Activated T-helper 2 cell treated with anti-CD3 and anti-CD28 coated beads, Interferon-gamma antibody, Interleukin-2, Interleukin-4, amounts not matched to agents 10 μg/mL and 5 μg/mL and 100 μg/mL, durations not matched to agents 14 hours and 24 hours and 36 hours (primary cell): ENCODE measurements at regions of chr17 and their contacts with region 1.

Region 1: GRCh38 chr17:38667099-38667786 is 7.5 kb downstream of the EPOP start:
- DNase-seq: peak; percentile 53
- H3K4me3 Mint-ChIP-seq: no peak overlapping the region
- H3K27ac Mint-ChIP-seq: no peak overlapping the region
- H3K4me1 Mint-ChIP-seq: peaks cover 13% of the 10 kb centered on the region
- H3K27me3 Mint-ChIP-seq: peaks cover 51% of the 10 kb centered on the region

Region 2: GRCh38 chr17:38428112-38428642 is 239.1 kb before region 1 on chr17 and contains the start of gene ARHGAP23:
- intact Hi-C with region 1: loop called (anchors 10 kb)
- DNase-seq: no peak
- H3K4me3 Mint-ChIP-seq: peak within 1 kb of the TSS; percentile 80
- H3K27ac Mint-ChIP-seq: no peak within 1 kb of the TSS
- H3K4me1 Mint-ChIP-seq: peaks cover 5% of the 10 kb centered on the region
- H3K27me3 Mint-ChIP-seq: peaks cover 33% of the 10 kb centered on the region
- total RNA-seq, gene ARHGAP23: 0.32 and 1.2 TPM in 2 replicates

Region 3: DNA sequence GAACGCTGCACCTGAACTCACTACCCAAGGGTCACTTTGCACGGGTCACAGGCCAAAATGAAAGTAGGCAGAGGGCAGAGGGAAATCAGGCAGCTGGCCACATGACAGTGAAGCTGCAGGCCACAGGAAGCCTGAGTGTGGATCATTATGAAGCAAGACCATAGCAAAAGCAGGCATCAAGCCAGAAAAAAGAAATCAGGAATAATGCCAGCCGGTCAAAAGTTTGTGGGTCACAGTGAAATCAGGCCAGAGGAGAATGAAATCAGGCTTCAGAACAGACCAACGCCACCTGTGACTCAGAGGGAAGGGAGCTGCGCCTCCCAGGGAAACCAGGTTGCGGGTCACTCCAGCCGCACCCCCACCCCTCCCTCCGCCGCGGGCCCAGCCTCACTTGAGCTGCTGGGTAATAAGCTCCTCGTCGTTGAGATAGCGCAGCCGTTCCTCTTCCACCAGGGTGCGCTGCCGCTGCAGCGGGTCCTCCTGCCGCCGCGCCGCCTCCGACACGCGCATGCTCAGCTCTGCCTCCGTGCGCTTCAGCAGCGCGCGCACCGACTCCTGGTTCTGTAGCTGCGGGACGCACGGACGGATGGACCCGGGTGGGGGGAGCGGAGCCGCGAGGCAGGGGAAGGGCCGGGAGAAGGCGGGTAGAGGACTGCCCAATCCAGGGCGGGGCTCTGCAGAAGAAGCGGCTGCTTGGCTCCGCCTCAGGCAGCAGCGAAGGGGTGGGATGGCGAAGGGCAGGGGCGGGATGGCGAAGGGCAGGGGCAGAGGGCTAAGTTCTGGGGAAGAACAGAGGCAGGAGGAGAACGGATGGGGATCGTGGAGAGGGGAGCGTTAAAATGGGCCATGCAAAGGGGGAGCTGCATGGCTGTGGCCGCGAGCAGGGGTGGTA is 109.2 kb before region 1 on chr17:
- intact Hi-C with region 1: loop called (anchors 1 kb)
- DNase-seq: peak; percentile 86
- H3K4me3 Mint-ChIP-seq: peak overlapping the region; percentile 84
- H3K27ac Mint-ChIP-seq: no peak overlapping the region
- H3K4me1 Mint-ChIP-seq: peaks cover 20% of the 10 kb centered on the region
- H3K27me3 Mint-ChIP-seq: peaks cover 51% of the 10 kb centered on the region